Activated T-helper 2 cell treated with anti-CD3 and anti-CD28 coated beads, Interferon-gamma antibody, Interleukin-2, Interleukin-4, amounts not matched to agents 10 μg/mL and 5 μg/mL and 100 μg/mL, durations not matched to agents 14 hours and 24 hours and 36 hours (primary cell): ENCODE measurements at regions of chr5 and their contacts with region 1.

Region 1: DNA sequence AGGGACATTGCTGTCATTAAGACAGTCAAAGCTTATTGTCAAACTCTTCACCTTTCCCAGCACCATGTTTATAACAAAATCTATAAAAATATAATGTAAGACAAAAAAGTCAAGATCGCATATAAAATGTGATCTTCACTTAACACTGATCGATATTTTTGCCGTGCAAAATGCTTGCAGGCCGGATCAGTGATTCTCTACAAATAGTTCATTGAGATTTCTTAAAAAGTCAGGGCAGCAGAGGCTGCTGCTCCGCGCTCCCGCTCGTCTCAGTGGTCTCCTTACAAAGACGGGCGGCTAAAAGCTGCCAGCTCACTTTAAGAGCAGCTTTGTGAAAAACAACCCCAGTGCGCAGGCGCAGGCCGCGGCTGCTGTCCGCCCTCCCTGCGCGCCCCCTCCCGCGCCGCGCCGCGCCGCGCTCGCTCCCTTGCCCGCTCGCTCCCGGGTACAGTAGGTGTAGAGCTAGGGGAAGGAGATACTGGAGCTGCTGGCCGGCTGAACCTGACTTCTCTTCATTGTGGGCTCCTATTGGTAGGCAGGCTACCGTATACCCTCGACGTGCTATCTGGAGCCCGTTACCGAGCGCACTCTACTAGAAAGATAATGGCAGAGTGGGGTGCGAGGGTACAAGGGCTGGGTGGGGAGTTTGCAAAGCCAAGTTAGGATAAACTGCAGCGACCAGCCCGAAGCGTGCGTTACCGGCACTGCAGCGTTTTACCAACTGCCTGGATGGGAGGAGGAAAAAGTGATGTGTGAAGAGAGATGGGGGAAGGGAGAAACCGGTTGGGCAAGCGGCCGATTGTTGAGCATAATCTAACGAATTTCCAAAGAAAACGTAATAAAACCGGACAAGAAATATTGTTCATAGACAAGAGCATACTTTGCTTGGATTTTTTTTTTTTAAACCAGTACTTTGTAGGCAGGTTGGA is at the start of gene ARRDC3:
- DNase-seq: peak; percentile 96
- H3K4me3 Mint-ChIP-seq: peak within 1 kb of the TSS; percentile 98
- H3K27ac Mint-ChIP-seq: peak within 1 kb of the TSS; percentile 100
- H3K4me1 Mint-ChIP-seq: peaks cover 26% of the 10 kb centered on the region
- H3K27me3 Mint-ChIP-seq: no peaks in the 10 kb centered on the region
- total RNA-seq, gene ARRDC3: 17.6 TPM in 2 replicates

Region 2: GRCh38 chr5:90866333-90866732 is 517.0 kb before region 1 on chr5:
- intact Hi-C with region 1: loop called (anchors 1 kb)
- DNase-seq: no peak
- H3K4me3 Mint-ChIP-seq: no peak overlapping the region
- H3K27ac Mint-ChIP-seq: no peak overlapping the region
- H3K4me1 Mint-ChIP-seq: peaks cover 9% of the 10 kb centered on the region
- H3K27me3 Mint-ChIP-seq: peaks cover 15% of the 10 kb centered on the region

Region 3: DNA sequence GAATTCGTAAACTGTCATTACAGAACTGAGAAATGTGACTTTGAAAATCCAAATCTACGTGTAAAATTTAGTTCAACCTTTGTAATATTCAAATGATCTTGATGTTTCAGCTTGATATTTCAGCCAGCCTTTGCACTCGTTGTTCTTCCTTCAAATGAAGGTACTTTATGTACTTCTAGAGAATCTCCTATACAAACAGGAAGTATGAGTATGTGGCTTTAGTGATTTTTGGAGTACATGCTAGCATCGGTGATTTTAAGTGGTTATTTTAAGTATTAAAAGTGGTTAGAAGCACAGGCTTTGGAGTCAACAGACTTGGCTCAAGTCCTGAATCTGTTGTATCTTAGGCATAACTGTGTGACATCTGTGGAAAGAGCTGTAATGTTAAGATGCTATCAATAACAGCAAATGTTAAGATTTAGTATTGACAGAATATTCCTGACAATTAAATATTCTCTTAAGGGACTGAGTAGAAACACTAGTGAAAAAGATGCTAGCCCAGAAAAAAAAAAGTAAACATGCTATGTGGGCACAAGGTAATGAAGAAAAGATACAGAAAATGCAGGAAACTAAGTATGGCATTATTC is 426.7 kb before region 1 on chr5:
- intact Hi-C with region 1: loop called (anchors 1 kb)
- DNase-seq: no peak
- H3K4me3 Mint-ChIP-seq: peak overlapping the region; percentile 1
- H3K27ac Mint-ChIP-seq: peak overlapping the region; percentile 91
- H3K4me1 Mint-ChIP-seq: peaks cover 22% of the 10 kb centered on the region
- H3K27me3 Mint-ChIP-seq: no peaks in the 10 kb centered on the region

Region 4: GRCh38 chr5:91162534-91163381 is 220.5 kb before region 1 on chr5:
- intact Hi-C with region 1: loop called (anchors 1 kb)
- DNase-seq: peak; percentile 64
- H3K4me3 Mint-ChIP-seq: peak overlapping the region; percentile 27
- H3K27ac Mint-ChIP-seq: peak overlapping the region; percentile 77
- H3K4me1 Mint-ChIP-seq: peaks cover 39% of the 10 kb centered on the region
- H3K27me3 Mint-ChIP-seq: no peaks in the 10 kb centered on the region

Region 5: GRCh38 chr5:91280362-91281269 is 102.7 kb before region 1 on chr5:
- intact Hi-C with region 1: loop called (anchors 1 kb)
- DNase-seq: peak; percentile 79
- H3K4me3 Mint-ChIP-seq: peak overlapping the region; percentile 81
- H3K27ac Mint-ChIP-seq: peak overlapping the region; percentile 96
- H3K4me1 Mint-ChIP-seq: peaks cover 36% of the 10 kb centered on the region
- H3K27me3 Mint-ChIP-seq: peaks cover 10% of the 10 kb centered on the region

Region 6: GRCh38 chr5:91366571-91366970 is 16.7 kb before region 1 on chr5:
- intact Hi-C with region 1: no loop called
- DNase-seq: no peak
- H3K4me3 Mint-ChIP-seq: no peak overlapping the region
- H3K27ac Mint-ChIP-seq: no peak overlapping the region
- H3K4me1 Mint-ChIP-seq: peaks cover 7% of the 10 kb centered on the region
- H3K27me3 Mint-ChIP-seq: peaks cover 4% of the 10 kb centered on the region

Region 7: GRCh38 chr5:91727463-91727862 is 344.2 kb after region 1 on chr5:
- intact Hi-C with region 1: no loop called
- DNase-seq: no peak
- H3K4me3 Mint-ChIP-seq: no peak overlapping the region
- H3K27ac Mint-ChIP-seq: no peak overlapping the region
- H3K4me1 Mint-ChIP-seq: no peaks in the 10 kb centered on the region
- H3K27me3 Mint-ChIP-seq: no peaks in the 10 kb centered on the region